Activated CD8-positive, alpha-beta T cell treated with anti-CD3 and anti-CD28 coated beads, Interleukin-2, amount 10 ng/mL, durations not matched to agents 7 days and 5 days (primary cell): ENCODE measurements at regions of chr15 and their contacts with region 1.

Region 1: DNA sequence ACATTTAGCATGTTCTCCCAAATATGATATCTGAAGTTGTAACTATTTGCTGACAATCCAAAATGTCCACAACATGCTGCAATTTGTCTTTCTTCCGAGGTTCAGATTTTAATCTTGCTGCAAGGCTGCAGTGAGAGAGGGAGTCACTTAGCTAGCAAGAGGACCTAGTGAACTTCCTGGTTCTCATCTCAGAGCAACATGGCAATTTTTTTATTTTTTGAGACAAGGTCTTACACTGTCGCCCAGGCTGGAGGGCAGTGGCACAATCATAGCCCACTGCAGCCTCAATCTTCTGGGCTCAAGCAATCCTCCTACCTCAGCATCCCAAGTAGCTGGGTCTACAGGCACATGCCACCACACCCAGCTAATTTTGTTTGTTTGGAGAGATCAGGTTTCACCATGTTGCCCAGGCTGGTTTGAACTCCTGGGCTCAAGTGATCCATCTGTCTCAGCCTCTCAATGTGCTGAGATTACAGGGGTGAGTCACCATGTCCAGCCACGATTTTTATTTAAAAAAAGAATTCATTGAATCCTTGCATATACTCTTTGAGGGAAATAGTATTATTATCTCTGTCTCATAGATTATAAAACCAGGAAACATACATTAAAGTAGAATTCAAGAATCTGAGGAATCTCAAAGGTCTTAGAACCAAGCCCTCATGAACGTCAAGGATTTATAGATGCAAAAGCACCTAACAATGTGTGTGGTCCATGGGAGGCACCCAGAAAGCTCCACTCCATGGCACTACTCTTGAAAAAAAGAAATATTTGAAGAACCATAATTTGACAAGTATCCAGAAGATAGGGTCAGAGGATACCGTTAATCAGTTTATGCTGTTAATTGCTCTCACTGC is 9.1 kb downstream of the HDC start:
- DNase-seq: peak; percentile 12
- ATAC-seq: no peak
- H3K4me3 Mint-ChIP-seq: no peak overlapping the region
- H3K27ac Mint-ChIP-seq: no peak overlapping the region
- H3K4me1 Mint-ChIP-seq: peaks cover 58% of the 10 kb centered on the region
- H3K27me3 Mint-ChIP-seq: no peaks in the 10 kb centered on the region

Region 2: GRCh38 chr15:49174902-49175301 is 1081.5 kb before region 1 on chr15:
- CTCF ChIA-PET with region 1: no interaction called
- POLR2A ChIA-PET with region 1: no interaction called
- DNase-seq: no peak
- ATAC-seq: no peak
- H3K4me3 Mint-ChIP-seq: no peak overlapping the region
- H3K27ac Mint-ChIP-seq: peak overlapping the region; percentile 15
- H3K4me1 Mint-ChIP-seq: peaks cover 25% of the 10 kb centered on the region
- H3K27me3 Mint-ChIP-seq: no peaks in the 10 kb centered on the region

Region 3: GRCh38 chr15:50241684-50242450 is 14.5 kb before region 1 on chr15:
- CTCF ChIA-PET with region 1: interaction called, 34 read pairs
- POLR2A ChIA-PET with region 1: interaction called, 24 read pairs
- DNase-seq: no peak
- ATAC-seq: peak; percentile 58
- H3K4me3 Mint-ChIP-seq: no peak overlapping the region
- H3K27ac Mint-ChIP-seq: no peak overlapping the region
- H3K4me1 Mint-ChIP-seq: peaks cover 21% of the 10 kb centered on the region
- H3K27me3 Mint-ChIP-seq: no peaks in the 10 kb centered on the region

Region 4: DNA sequence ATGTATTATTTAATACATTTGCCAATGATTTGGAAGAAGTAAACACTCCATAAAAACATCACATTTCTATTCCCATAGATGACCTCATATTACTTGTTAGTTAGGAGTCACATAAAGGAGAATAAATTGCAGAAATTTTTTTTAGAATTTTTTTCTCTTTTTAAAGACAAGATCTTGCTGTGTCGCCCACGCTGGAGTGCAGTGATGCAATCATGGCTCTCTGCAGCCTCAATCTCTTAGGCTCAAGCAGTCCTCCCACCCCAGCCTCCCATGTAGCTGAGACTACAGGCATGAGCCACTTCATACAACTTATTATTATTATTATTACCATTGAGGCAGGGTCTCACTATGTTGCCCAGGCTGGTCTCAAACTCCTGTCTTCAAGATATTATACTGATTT is 155.5 kb after region 1 on chr15:
- CTCF ChIA-PET with region 1: no interaction called
- POLR2A ChIA-PET with region 1: no interaction called
- DNase-seq: no peak
- ATAC-seq: no peak
- H3K4me3 Mint-ChIP-seq: no peak overlapping the region
- H3K27ac Mint-ChIP-seq: no peak overlapping the region
- H3K4me1 Mint-ChIP-seq: no peaks in the 10 kb centered on the region
- H3K27me3 Mint-ChIP-seq: peaks cover 14% of the 10 kb centered on the region